ENCODE measurements at regions of chr2 and their contacts with region 1.

Region 1: DNA sequence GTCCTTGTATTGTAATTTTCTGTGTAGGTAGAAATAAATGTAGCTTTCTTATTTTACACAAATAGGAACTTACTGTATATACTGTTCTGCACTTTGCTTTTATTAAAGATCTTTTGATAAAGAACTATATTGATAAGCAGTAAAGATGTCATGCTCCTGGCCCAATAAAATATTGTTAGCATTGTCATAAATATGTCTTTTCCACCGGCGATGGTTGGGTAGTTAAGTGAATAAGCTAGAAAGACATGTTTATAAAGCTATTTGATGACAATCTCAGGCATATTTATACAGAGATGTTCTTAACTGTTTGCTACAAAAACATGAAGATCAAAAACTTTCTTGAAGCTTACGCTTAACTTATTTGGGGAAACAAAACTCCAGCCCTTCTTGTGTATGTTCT is 69.3 kb downstream of the ACTR3 start:
- DNase-seq: no peak
- H3K4me3 ChIP-seq: no peak overlapping the region
- H3K27ac ChIP-seq: no peak overlapping the region
- H3K4me1 ChIP-seq: no peaks in the 10 kb centered on the region
- CTCF ChIP-seq: no peak

Region 2: DNA sequence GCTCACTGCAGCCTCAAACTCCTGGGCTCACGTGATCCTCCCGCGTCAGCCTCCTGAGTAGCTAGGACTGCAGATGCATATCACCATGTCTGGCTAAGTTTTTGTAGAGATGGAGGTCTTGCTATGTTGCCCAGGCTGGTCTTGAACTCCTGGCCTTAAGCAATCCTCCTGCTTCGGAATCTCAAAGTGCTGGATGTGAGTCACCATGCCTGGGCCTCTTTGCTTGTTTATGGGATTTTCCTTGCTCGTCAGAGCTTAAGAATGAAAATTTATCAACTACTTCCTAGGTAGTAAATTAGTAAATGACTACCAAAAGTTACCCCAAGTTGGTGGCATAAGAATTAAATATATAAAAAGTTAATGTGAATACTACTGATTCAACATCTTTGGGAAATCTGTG is 18.3 kb before region 1 on chr2:
- CTCF ChIA-PET with region 1: no interaction called
- POLR2A ChIA-PET with region 1: interaction called, 14 read pairs
- intact Hi-C with region 1: no loop called
- DNase-seq: no peak
- H3K4me3 ChIP-seq: no peak overlapping the region
- H3K27ac ChIP-seq: no peak overlapping the region
- H3K4me1 ChIP-seq: no peaks in the 10 kb centered on the region
- CTCF ChIP-seq: no peak

Region 3: DNA sequence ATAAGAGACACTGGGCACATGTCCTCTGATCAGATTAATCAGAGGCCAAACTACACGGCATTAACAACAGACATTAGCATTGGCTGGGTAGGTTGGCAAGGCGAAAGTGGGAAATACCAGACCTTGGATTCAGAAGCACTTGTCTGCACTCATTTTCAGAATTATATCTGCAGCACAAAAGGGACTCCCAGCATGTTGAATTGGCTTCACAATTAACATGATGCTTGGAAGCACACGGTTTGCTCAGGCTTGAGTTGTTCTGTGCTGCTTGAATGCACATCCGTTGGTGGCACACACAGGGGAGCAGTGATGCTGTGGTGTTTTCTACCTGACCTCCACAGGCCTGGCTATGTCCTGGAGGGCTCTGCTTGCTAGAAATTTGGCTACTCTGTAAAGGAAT is 14.6 kb after region 1 on chr2:
- CTCF ChIA-PET with region 1: no interaction called
- POLR2A ChIA-PET with region 1: interaction called, 5 read pairs
- intact Hi-C with region 1: loop called (anchors 2 kb)
- DNase-seq: peak; percentile 72
- H3K4me3 ChIP-seq: no peak overlapping the region
- H3K27ac ChIP-seq: peak overlapping the region; percentile 12
- H3K4me1 ChIP-seq: peaks cover 14% of the 10 kb centered on the region
- CTCF ChIP-seq: no peak

Region 4: DNA sequence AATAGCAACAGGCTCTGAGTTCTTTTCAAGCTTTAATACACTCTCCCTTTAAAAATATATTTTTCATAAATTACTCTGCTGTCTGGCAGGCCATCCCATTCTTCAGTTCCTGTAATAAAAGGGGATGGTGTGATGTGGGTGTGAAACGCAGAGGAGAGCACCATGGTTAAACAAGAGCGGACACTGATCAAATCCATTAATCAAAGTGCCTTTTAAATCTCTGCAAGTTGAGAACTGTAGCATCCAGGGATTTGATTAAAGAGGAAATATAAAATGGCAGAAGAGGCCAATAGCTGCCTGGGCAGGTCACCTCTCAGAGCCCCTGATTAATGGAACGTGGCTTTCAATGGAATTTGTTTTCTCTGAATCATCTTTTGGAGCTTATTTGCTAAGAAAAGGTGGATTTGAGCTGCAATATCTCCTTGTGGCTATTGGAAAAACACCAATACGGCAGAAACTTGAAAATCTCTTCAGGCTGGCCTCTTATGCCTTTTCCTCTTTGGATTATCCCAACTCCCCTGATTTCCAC is 27.6 kb after region 1 on chr2:
- CTCF ChIA-PET with region 1: no interaction called
- POLR2A ChIA-PET with region 1: no interaction called
- intact Hi-C with region 1: no loop called
- DNase-seq: no peak
- H3K4me3 ChIP-seq: no peak overlapping the region
- H3K27ac ChIP-seq: no peak overlapping the region
- H3K4me1 ChIP-seq: no peaks in the 10 kb centered on the region
- CTCF ChIP-seq: no peak

Measured in OCI-LY7 (cell line).